Activated CD4-positive, alpha-beta memory T cell treated with anti-CD3 and anti-CD28 coated beads for 36 hours (primary cell): ENCODE measurements at regions of chr11 and their contacts with region 1.

Region 1: DNA sequence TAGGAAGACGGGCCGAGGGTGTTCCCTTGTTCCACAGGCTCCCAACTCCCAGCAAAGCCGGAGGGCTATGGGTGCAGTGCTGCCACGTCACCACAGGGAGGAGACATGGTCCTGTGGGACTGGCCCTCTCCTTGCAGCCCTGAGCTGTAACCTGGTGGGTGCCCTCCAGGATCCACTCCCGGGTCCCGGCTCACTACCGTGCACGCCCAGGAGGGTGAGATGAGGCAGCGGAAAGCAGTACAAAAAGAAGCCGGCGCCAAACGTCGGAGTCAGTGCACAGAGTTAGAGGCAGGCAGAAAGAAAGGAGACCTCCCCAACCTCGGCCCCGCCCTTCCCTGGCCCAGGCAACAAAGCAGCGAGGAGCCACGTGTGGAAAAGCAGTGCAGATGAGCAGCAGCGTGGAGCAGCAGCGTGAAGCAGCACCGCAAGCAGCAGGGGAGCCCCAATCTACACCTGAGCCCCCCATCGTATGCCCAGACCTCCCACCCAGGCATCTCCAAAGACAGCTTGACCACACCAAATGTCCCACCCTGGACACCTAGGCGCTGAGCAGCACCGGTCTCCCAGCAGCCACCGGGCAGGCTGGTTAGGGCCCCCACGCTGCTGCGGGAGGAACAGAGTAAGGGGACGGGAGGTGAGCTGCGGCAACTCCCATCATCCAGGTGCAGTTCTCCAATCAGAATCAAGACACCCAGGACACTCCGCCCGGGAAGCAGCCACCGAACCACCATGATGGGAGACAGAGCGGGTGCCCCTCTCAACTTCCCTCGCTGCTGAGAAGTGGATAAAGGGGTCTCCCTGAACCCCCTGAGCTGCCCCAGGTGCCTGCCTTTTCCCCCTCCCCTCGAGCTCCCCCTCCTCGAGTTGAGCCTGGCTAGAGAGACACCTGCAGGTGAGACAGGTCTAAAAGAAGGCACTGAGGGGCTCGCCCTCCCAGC is 28.8 kb downstream of the IGSF9B start:
- DNase-seq: peak; percentile 80
- H3K4me3 Mint-ChIP-seq: peak overlapping the region; percentile 49
- H3K27ac Mint-ChIP-seq: peak overlapping the region; percentile 77
- H3K4me1 Mint-ChIP-seq: peaks cover 31% of the 10 kb centered on the region
- H3K27me3 Mint-ChIP-seq: no peaks in the 10 kb centered on the region

Region 2: DNA sequence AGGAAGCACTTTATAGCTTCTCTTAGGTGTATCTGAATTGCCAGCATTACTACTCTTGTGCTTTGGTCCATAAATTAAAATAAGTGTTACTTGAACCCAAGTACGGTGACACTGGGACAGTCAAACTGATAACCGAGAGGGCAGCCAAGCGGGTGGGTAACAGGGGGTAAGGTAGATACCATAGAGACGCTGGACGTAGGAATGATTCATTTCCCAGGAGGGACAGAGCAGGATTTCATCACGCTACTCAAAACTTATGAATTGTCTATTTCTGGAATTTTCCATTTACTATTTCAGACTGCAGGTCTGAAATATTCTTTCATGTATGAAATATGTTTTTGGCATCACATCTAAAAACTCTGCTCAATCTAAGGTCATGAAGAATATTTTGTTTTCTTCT is 67.8 kb before region 1 on chr11:
- CTCF ChIA-PET with region 1: no interaction called
- POLR2A ChIA-PET with region 1: no interaction called
- intact Hi-C with region 1: no loop called
- DNase-seq: no peak
- H3K4me3 Mint-ChIP-seq: no peak overlapping the region
- H3K27ac Mint-ChIP-seq: no peak overlapping the region
- H3K4me1 Mint-ChIP-seq: no peaks in the 10 kb centered on the region
- H3K27me3 Mint-ChIP-seq: peaks cover 36% of the 10 kb centered on the region

Region 3: DNA sequence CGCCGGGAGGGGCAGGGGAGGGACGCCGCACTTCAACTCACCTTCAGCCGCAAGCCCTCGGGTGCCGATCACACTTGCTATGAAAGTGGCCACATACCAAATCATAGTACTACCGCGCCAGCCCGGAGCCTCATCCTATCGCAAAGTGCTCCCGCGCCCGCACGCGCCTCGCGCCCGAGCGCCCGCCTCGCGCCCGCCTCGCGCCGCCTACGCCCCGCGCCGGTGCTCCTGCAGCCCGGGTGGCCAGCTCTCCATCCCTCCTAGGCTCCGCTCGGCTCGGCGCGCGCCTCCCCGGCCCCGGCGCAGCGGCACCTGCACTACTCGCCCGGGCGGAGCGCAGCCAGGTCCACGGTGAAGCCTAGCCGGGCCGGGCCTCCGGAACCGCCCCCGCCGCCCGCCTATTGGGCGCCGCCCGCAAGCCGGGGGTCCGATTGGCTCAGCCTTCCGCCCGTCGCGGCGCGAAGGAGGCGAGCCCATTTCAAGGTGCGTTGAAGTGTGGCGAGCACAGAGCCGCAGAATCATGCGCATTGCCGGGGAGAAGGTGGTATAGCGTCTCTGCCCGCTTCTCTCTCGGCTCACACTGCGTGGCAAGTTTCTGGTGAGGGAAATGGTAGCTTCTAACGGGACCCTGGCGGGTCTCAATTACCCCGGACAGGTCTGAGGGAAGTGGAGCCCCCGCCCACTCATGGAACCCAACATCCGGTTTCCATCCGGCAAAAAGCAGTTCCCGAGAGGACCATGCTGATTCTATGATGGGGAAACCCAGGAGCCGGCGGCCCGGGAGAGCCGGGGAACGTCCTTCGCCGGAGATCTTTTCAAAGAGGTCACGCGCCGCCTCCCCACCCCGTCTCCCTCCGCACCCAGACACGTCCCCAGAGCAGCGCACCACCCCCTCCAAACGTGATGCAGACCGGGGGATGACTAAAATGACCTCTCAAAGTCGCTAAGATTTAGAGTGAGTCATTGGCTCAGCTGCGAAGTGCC is 29.0 kb after region 1 on chr11 and contains the start of gene IGSF9B:
- CTCF ChIA-PET with region 1: interaction called, 31 read pairs
- POLR2A ChIA-PET with region 1: interaction called, 11 read pairs
- intact Hi-C with region 1: loop called (anchors 1 kb)
- DNase-seq: peak; percentile 94
- H3K4me3 Mint-ChIP-seq: peak within 1 kb of the TSS; percentile 86
- H3K27ac Mint-ChIP-seq: peak within 1 kb of the TSS; percentile 89
- H3K4me1 Mint-ChIP-seq: peaks cover 45% of the 10 kb centered on the region
- H3K27me3 Mint-ChIP-seq: peaks cover 9% of the 10 kb centered on the region
- total RNA-seq, gene IGSF9B: 24.6 to 30.3 TPM

Region 4: DNA sequence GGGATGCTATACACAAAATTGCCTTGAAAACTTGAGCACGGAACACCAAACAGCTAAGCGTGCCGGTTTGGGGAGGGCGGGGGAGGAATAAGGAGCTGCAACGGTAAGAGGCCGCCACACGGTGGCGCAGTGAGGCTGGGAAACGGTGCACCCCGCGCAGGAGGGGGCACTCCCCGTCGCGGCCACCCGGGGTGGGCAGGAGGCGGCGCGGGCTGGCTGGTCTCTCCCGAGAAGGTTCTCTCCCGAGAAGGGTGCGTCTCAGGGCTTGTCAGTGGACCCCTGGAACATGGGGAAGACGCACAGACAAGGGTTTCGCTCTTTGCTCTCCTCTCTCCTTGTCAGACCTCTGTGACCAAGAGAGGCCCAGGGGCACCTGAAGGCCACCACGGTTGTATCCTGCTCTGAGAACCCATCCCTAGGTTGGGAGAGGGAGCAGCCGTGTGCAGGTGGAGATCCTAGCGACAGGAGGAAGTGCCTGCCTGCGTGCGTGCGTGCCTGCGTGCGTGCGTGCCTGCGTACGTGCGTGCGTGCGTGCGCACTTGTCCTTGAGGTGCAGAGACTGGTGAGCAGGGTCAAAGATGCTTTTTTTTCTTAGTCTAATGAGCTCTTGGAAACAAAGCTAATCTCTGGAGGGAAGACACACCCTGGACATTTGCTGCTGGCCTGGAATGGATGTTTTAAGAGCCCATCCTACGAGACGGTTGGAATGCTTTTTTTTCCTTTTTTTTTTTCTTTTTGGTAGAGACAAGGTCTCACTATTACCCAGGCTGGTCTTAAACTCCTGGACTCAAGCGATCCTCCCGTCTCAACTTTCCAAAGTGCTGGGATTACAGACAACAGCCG is 122.8 kb after region 1 on chr11:
- CTCF ChIA-PET with region 1: interaction called, 40 read pairs
- POLR2A ChIA-PET with region 1: interaction called, 4 read pairs
- intact Hi-C with region 1: loop called (anchors 1 kb)
- DNase-seq: peak; percentile 81
- H3K4me3 Mint-ChIP-seq: peak overlapping the region; percentile 67
- H3K27ac Mint-ChIP-seq: peak overlapping the region; percentile 74
- H3K4me1 Mint-ChIP-seq: peaks cover 5% of the 10 kb centered on the region
- H3K27me3 Mint-ChIP-seq: peaks cover 24% of the 10 kb centered on the region

Region 5: DNA sequence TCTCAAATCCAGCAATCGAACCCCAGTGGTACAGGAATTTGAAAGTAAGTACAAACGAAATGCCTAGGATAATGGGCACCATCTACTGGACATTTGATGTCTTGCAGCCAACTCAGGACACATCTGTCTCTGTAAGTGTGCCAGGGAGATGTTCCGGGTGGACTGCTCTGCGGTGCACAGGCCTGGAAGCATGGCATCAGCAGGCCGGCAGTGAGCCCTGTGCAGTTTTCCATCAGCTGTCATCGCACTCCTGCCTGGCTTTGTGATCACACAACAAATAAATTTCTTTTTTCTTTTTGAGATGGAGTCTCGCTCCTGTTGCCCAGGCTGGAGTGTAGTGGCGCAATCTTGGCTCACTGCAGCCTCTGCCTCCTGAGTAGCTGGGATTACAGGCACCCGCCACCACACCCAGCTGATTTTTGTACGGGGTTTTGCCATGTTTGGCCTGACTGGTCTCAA is 211.9 kb after region 1 on chr11:
- CTCF ChIA-PET with region 1: interaction called, 27 read pairs
- POLR2A ChIA-PET with region 1: no interaction called
- intact Hi-C with region 1: loop called (anchors 1 kb)
- DNase-seq: peak; percentile 56
- H3K4me3 Mint-ChIP-seq: no peak overlapping the region
- H3K27ac Mint-ChIP-seq: no peak overlapping the region
- H3K4me1 Mint-ChIP-seq: peaks cover 14% of the 10 kb centered on the region
- H3K27me3 Mint-ChIP-seq: no peaks in the 10 kb centered on the region

Region 6: GRCh38 chr11:134244655-134245054 is 316.7 kb after region 1 on chr11:
- CTCF ChIA-PET with region 1: no interaction called
- POLR2A ChIA-PET with region 1: interaction called, 3 read pairs
- intact Hi-C with region 1: loop called (anchors 1 kb)
- DNase-seq: no peak
- H3K4me3 Mint-ChIP-seq: no peak overlapping the region
- H3K27ac Mint-ChIP-seq: no peak overlapping the region
- H3K4me1 Mint-ChIP-seq: peaks cover 12% of the 10 kb centered on the region
- H3K27me3 Mint-ChIP-seq: no peaks in the 10 kb centered on the region

Region 7: GRCh38 chr11:134275534-134276395 is 347.8 kb after region 1 on chr11 and contains the start of gene GLB1L3:
- CTCF ChIA-PET with region 1: interaction called, 4 read pairs
- POLR2A ChIA-PET with region 1: no interaction called
- intact Hi-C with region 1: loop called (anchors 1 kb)
- DNase-seq: peak; percentile 86
- H3K4me3 Mint-ChIP-seq: peak within 1 kb of the TSS; percentile 95
- H3K27ac Mint-ChIP-seq: peak within 1 kb of the TSS; percentile 99
- H3K4me1 Mint-ChIP-seq: peaks cover 33% of the 10 kb centered on the region
- H3K27me3 Mint-ChIP-seq: peaks cover 4% of the 10 kb centered on the region
- total RNA-seq, gene GLB1L3: 7.1 to 8.6 TPM

Region 8: GRCh38 chr11:134725716-134726639 is 798.0 kb after region 1 on chr11:
- CTCF ChIA-PET with region 1: no interaction called
- POLR2A ChIA-PET with region 1: no interaction called
- intact Hi-C with region 1: no loop called
- DNase-seq: no peak
- H3K4me3 Mint-ChIP-seq: no peak overlapping the region
- H3K27ac Mint-ChIP-seq: no peak overlapping the region
- H3K4me1 Mint-ChIP-seq: no peaks in the 10 kb centered on the region
- H3K27me3 Mint-ChIP-seq: peaks cover 14% of the 10 kb centered on the region